AG04449 (cell line): ENCODE measurements at regions of chr4 and their contacts with region 1.

Region 1: DNA sequence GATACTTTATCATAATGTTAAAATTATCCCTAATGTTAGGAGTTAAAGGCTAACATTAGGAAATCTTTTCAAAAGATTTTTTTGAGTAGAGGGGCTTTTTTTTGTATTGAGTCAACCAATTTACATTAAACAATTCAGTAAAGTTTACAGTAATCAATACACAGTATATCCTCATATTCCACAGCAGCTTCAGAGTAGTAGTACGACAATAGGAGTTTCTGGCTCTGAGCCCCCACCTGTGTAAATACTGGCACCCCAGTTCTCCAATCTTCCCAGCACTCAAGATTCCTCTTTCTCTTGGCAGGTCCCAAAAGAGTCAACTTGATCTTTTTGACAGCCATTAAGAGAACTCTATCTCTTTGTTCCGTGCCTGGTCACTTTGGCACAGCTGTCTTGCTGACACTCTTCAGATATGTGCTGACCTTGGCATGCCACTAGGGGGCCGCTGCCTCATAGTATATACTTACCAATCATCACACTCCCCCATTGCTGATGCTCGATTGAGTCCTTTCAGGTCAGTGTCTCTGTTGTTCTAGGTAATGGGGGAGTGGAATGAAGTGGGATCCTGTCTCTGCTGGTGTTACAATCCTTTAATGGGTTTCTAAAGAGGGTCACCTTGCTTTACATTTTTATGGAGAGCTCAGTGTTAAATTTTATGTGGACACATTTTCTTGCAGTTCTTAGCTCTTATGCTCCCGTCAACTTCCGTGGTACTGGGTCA is 19.5 kb upstream of the CCNI start:
- DNase-seq: no peak
- H3K4me3 ChIP-seq: no peak overlapping the region
- CTCF ChIP-seq: peak; percentile 87

Region 2: DNA sequence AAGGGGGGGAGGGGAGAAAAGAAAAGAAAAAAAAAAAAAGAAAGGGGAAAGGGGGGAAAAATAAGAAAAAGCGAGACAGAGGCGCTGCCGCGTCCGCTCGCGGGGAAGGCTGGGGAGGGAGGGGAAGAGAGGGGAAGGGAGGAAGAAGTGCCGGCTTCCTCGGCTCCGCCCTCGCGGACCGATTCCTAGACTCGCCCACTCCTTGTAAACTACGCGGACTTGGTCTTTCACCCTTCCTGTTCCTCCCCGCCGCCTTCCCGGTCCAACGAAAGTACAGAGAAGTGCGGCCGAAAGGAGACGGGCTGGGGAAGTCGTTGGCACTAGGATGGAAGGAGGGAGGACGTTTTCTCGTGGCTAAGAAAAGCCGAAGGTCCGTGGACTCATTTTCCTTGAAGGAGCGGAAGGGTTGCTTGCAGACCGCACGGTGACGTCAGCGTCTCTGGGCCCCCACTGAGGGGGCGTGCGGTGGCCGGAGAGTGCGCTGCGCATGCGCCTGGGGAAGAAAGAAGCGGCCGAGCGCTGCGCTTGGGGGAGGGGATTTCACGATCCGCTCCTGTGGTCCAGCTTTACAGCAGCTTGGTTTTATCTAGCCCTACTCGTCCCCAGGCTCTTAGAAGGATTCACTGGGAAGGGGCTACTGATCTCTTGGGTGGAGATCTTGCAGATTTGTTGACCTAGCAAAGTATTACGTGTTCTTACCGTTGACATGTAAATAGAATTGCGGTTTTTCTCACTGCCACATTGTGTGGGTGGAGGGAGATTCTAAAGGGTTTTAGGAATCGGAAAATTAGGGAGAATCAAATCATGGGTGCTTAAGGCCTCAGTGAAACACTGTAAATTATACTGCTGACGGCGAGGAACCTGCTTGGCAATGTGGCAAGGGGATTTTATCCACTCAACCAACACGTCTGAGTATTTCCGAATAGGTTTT is 19.1 kb before region 1 on chr4 and contains the start of gene CCNI:
- CTCF ChIA-PET with region 1: interaction called, 21 read pairs
- POLR2A ChIA-PET with region 1: no interaction called
- DNase-seq: peak; percentile 89
- H3K4me3 ChIP-seq: peak within 1 kb of the TSS; percentile 92
- CTCF ChIP-seq: no peak

Region 3: GRCh38 chr4:77082886-77083608 is 12.2 kb before region 1 on chr4:
- CTCF ChIA-PET with region 1: interaction called, 34 read pairs
- POLR2A ChIA-PET with region 1: no interaction called
- DNase-seq: no peak
- H3K4me3 ChIP-seq: no peak overlapping the region
- CTCF ChIP-seq: no peak

Region 4: DNA sequence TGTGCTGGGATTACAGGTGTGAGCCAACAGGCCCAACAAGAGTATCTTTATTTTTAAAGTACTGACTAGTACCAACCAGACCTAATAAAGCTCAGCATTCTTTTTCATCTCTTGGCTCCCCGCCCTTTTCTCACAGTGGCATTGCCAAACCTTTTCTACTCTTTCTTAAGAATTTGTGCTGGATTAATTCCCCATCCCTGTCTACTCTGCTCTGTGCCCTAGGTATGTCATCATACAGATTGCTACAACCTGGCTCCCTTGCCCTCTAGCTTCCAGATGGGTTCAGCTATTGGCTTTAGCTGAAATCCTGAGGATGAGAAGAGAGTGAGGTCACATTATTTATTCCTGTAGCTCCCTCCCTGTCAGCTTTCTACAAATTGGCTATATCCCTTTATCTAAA is 15.5 kb after region 1 on chr4:
- CTCF ChIA-PET with region 1: interaction called, 62 read pairs
- POLR2A ChIA-PET with region 1: no interaction called
- DNase-seq: no peak
- H3K4me3 ChIP-seq: no peak overlapping the region
- CTCF ChIP-seq: no peak

Region 5: DNA sequence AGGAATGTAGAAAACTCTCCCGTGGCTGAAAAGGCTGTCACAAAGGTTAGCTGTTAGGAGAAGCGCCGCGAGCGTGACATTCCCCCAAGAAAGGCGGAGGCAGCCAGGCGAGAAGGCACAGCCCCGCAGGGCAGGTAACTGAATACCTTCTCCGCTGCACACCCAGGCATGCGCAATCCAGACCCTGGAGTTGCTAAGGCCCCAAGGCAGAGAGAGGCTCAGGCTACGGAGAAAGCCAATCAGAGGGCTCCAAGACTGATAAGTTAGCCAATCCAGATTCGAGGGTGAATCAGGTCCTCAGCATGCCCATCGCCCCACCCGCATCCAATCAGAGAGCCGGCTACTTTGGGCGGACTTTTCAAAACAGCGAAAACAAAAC is 61.3 kb after region 1 on chr4:
- CTCF ChIA-PET with region 1: interaction called, 20 read pairs
- POLR2A ChIA-PET with region 1: no interaction called
- DNase-seq: peak; percentile 98
- H3K4me3 ChIP-seq: peak overlapping the region; percentile 96
- CTCF ChIP-seq: no peak

Region 6: GRCh38 chr4:77308843-77309242 is 213.6 kb after region 1 on chr4:
- CTCF ChIA-PET with region 1: interaction called, 17 read pairs
- POLR2A ChIA-PET with region 1: no interaction called
- DNase-seq: no peak
- H3K4me3 ChIP-seq: no peak overlapping the region
- CTCF ChIP-seq: peak; percentile 32